Mucosa of descending colon (tissue), 3 donors: ENCODE measurements at regions of chr1 and their contacts with region 1.

Region 1: DNA sequence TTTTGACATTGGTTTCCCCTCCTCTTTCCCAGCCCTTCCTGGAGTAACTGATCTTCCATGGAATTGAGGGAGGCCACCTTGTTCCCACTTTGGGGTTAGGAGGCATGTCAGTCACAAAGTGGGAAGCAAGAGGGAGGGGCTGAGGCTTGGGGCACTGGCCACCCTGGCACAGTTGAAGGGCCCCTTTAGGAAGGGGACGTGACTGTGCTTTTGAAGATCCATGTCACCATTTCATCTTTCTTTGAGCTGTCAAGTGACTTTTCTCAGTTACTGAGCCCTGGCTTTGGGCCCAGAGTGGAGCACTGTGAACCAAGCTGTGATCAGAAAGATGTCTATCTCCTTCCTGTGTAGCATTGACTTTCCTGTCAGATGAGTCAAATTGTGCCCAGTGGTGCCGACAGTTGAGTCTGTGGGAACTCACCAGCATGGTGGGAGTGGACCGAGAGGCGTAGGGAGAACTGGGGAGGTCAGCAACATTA is 38.5 kb upstream of the TDRD10 start:
- DNase-seq: no peak
- ATAC-seq: peak; percentile 42
- H3K4me3 ChIP-seq: no peak overlapping the region
- H3K4me1 ChIP-seq: peaks cover 14% of the 10 kb centered on the region
- CTCF ChIP-seq: no peak

Region 2: GRCh38 chr1:154404984-154405761 is 58.4 kb before region 1 on chr1 and contains the start of gene IL6R:
- intact Hi-C with region 1: loop called in 1 of 2 experiments (anchors 10 kb)
- DNase-seq: peak; percentile 89 to 95 (median 92)
- ATAC-seq: peak; percentile 86
- H3K4me3 ChIP-seq: peak within 1 kb of the TSS; percentile 60
- H3K4me1 ChIP-seq: peaks cover 28% of the 10 kb centered on the region
- CTCF ChIP-seq: peak; percentile 28
- total RNA-seq, gene IL6R: 31.8 to 43.9 (median 42.5) TPM

Region 3: DNA sequence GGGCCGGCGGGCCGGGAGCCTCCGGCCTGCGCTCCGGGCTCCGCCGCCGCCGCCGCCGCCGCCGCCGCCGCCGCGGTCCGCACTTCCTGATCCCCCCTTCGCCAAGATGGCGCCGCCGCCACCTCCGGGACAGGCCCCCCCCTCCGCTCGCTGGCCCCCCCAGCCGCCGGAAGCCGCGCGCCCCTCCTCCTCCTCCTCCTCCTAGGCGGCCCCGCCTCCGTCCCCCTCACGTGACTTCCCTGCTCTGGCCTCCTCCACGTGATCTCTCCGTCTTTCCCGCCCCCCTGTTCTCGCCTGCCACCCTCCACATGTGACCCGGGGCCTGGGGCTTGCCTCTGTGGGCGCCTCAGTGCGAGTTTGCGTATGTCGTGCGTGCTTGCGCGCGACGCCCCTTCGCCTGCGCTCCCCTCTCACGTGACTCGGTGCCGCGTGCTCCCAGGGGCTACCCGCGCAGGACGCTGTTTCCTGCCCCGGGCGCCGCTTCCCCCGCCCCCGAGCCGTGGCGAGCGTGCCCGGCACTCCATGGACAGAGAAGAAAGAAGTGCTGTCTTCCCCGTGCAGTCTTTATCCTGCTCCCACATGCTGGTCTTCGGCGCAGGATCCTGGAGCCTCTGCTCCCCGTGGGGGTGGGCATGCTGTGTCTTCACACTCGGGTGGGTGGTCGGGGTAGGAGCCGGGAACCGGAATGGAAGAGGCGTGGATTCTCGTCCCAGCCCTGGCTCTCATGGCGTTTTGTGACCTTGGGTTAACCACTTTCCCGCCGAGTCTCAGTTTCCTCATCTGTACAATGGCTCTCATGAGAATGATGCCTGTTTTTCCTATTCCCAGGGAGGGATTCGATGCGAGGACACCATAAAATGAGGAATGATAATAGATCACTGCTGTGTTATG is 95.3 kb after region 1 on chr1 and contains the start of gene UBE2Q1:
- intact Hi-C with region 1: no loop called
- DNase-seq: peak; percentile 98 to 100 (median 100)
- ATAC-seq: peak; percentile 94
- H3K4me3 ChIP-seq: peak within 1 kb of the TSS; percentile 90
- H3K4me1 ChIP-seq: peaks cover 26% of the 10 kb centered on the region
- CTCF ChIP-seq: no peak
- total RNA-seq, gene UBE2Q1: 52.8 to 81.7 (median 81.0) TPM

Region 4: GRCh38 chr1:154974063-154974807 is 510.7 kb after region 1 on chr1 and contains the start of gene CKS1B:
- intact Hi-C with region 1: no loop called
- DNase-seq: peak; percentile 98
- ATAC-seq: peak; percentile 84
- H3K4me3 ChIP-seq: peak within 1 kb of the TSS; percentile 23
- H3K4me1 ChIP-seq: peaks cover 44% of the 10 kb centered on the region
- CTCF ChIP-seq: no peak
- total RNA-seq, gene CKS1B: 26.8 to 52.4 (median 29.3) TPM